Vagina (tissue), 2 donors: ENCODE measurements at regions of chr22 and their contacts with region 1.

Region 1: GRCh38 chr22:23910496-23911130 is 16.4 kb downstream of the MIF start:
- DNase-seq: peak in 1 of 2 donors; percentile 42
- H3K4me3 ChIP-seq: no peak overlapping the region
- H3K27ac ChIP-seq: no peak overlapping the region
- H3K4me1 ChIP-seq: peaks cover 10% of the 10 kb centered on the region
- H3K27me3 ChIP-seq: no peaks in the 10 kb centered on the region
- CTCF ChIP-seq: no peak
- POLR2A ChIP-seq: no peak

Region 2: DNA sequence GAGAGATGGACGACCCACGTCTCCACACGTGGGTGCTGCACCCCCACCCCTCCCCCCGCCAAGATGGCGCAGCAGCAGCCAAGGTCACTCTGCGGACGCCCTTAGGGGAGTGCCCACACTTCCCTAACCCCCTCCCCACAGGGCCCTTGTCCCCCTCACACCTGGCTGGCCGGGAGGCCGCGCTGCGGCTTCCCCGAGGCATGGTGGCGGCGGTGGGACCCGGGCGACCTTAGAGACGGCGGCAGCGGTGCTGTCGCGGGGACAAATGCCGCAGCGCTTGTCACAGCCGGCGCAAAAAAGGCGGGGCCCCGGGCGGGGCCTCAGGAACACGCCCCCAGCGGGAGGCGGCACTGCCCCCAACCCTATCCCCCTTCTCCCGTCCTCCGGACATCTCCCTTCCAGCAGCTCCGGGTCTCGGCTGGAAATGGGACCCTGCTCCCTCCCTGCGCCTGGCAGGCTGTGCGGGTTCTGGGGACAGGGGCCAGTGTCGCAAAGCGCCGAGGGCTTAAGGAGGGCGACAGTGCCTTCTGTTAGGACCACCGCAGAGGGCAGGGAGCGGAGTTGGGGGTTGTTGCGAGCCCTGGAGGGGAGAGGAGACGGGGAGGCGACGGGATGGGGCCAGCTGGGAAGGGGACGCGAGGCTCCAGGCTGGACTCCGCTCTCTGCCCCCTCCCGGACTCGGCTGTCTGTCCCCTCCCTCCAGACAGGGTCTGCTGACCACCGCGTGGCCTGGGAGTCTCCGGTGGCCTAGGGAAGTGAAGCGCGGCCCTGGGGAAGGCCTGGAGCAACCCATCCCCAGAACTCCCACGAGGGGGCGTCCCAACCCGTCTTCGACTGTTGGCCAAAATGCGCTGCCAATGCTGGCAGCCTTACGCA is 142.7 kb before region 1 on chr22 and contains the start of gene CHCHD10:
- intact Hi-C with region 1: no loop called
- DNase-seq: no peak
- H3K4me3 ChIP-seq: peak within 1 kb of the TSS; percentile 55 to 84
- H3K27ac ChIP-seq: peak within 1 kb of the TSS; percentile 68
- H3K4me1 ChIP-seq: peaks cover 62% of the 10 kb centered on the region
- H3K27me3 ChIP-seq: no peaks in the 10 kb centered on the region
- CTCF ChIP-seq: peak; percentile 48 to 78 (median 71)
- POLR2A ChIP-seq: peak in 1 of 2 donors; percentile 56
- total RNA-seq, gene CHCHD10: 12.0 TPM

Region 3: DNA sequence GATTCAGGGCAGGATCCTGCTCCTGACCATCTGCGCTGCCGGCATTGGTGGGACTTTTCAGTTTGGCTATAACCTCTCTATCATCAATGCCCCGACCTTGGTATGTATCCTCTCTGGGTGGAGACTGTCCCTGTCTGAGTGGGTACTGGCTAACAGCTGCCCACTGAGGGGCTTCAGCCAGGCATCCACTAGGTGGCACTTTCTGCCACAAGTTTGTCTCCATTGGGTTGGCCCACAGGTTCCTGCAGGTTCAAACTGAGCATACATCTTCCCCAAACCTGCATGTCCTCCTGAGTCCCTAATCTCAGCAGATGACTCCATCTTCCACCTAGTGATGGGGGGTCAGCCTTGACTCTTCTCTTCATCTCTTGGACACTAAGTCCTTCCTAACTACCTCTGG is 48.5 kb before region 1 on chr22:
- intact Hi-C with region 1: loop called (anchors 2 kb)
- DNase-seq: no peak
- H3K4me3 ChIP-seq: no peak overlapping the region
- H3K27ac ChIP-seq: no peak overlapping the region
- H3K4me1 ChIP-seq: peaks cover 14% of the 10 kb centered on the region
- H3K27me3 ChIP-seq: no peaks in the 10 kb centered on the region
- CTCF ChIP-seq: peak in 1 of 3 experiments; percentile 16
- POLR2A ChIP-seq: no peak

Region 4: DNA sequence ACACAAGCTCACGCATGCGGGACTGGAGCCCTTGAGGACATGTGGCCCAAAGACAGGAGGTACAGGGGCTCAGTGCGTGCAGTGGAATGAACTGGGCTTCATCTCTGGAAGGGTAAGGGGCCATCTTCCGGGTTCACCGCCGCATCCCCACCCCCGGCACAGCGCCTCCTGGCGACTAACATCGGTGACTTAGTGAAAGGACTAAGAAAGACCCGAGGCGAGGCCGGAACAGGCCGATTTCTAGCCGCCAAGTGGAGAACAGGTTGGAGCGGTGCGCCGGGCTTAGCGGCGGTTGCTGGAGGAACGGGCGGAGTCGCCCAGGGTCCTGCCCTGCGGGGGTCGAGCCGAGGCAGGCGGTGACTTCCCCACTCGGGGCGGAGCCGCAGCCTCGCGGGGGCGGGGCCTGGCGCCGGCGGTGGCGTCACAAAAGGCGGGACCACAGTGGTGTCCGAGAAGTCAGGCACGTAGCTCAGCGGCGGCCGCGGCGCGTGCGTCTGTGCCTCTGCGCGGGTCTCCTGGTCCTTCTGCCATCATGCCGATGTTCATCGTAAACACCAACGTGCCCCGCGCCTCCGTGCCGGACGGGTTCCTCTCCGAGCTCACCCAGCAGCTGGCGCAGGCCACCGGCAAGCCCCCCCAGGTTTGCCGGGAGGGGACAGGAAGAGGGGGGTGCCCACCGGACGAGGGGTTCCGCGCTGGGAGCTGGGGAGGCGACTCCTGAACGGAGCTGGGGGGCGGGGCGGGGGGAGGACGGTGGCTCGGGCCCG is 16.5 kb before region 1 on chr22 and contains the start of gene MIF:
- intact Hi-C with region 1: no loop called
- DNase-seq: peak in 1 of 2 donors; percentile 95
- H3K4me3 ChIP-seq: peak within 1 kb of the TSS; percentile 86 to 92
- H3K27ac ChIP-seq: peak within 1 kb of the TSS; percentile 95
- H3K4me1 ChIP-seq: peaks cover 37% of the 10 kb centered on the region
- H3K27me3 ChIP-seq: no peaks in the 10 kb centered on the region
- CTCF ChIP-seq: peak; percentile 41 to 62 (median 54)
- POLR2A ChIP-seq: peak in 1 of 2 donors; percentile 95
- total RNA-seq, gene MIF: 638 TPM

Region 5: DNA sequence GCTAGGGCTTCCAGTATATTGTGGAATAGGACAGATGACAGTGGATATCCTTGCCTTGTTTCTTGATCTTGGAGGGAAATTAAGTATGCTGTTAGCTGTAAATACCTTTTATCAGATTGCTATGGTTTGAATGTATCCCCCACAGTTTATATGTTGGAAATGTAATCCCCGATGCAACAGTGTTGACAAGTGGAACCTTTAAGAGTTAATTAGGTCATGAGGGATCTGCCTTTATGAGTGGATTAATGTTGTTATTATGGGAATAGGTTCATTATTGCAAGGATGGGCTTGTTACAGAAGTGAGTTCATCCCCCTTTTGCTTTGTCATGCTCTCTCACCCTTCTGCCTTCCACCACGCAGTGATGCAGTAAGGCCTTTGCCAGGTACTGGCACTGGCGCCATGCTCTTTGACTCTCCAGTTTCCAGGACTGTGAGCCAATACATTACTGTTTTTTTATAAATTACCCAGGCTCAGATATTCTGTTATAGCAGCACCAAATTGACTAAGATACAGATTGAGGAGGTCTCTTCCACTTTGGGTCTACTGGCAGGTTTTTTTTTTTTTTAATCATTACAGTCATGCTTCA is 116.9 kb after region 1 on chr22:
- intact Hi-C with region 1: no loop called
- DNase-seq: peak in 1 of 2 donors; percentile 16
- H3K4me3 ChIP-seq: no peak overlapping the region
- H3K27ac ChIP-seq: no peak overlapping the region
- H3K4me1 ChIP-seq: peaks cover 14% of the 10 kb centered on the region
- H3K27me3 ChIP-seq: no peaks in the 10 kb centered on the region
- CTCF ChIP-seq: no peak
- POLR2A ChIP-seq: no peak

Region 6: DNA sequence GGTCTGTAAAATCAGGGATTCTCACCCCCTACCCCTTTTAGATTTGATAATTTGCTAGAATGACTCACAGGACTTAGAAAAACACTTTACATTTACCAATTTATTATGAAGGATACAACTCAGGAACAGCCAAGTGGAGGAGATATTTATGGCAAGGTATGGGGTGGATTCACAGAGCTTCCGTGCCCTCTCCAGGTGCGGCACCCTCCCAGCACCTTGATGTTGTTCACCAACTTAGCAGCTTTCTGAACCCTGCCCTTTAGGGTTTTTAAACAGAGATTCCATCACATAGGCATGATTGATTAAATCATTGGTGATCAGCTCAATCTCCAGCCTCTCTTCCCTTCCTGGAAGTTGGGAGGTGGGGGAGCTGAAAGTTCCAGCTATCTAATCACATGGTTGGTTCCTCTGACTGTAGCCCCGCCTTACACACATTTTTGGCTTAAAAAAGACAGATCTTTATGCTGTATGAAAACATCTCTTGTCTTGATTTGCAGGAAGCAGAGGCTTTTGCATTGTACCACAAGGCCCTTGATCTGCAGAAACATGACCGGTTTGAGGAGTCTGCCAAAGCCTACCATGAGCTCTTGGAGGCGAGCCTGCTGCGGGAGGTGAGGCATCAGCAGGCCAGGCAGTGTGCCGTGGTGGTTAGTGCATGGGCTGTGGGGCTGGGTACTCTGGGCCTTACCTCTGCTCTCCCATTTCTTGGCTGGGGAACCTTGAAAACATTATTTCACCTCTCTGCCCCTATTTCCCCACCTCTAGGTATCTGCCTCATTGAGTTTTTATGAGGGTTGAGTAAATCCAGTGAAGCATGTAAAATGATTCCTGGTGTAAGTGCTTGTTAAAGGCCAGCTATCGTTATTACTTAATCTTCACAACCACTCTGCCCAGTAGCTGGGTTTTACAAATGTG is 127.5 kb after region 1 on chr22:
- intact Hi-C with region 1: no loop called
- DNase-seq: peak in 1 of 2 donors; percentile 18
- H3K4me3 ChIP-seq: no peak overlapping the region
- H3K27ac ChIP-seq: no peak overlapping the region
- H3K4me1 ChIP-seq: no peaks in the 10 kb centered on the region
- H3K27me3 ChIP-seq: no peaks in the 10 kb centered on the region
- CTCF ChIP-seq: no peak
- POLR2A ChIP-seq: no peak